Uterus (tissue), 4 donors: ENCODE measurements at regions of chr3 and their contacts with region 1.

Region 1: DNA sequence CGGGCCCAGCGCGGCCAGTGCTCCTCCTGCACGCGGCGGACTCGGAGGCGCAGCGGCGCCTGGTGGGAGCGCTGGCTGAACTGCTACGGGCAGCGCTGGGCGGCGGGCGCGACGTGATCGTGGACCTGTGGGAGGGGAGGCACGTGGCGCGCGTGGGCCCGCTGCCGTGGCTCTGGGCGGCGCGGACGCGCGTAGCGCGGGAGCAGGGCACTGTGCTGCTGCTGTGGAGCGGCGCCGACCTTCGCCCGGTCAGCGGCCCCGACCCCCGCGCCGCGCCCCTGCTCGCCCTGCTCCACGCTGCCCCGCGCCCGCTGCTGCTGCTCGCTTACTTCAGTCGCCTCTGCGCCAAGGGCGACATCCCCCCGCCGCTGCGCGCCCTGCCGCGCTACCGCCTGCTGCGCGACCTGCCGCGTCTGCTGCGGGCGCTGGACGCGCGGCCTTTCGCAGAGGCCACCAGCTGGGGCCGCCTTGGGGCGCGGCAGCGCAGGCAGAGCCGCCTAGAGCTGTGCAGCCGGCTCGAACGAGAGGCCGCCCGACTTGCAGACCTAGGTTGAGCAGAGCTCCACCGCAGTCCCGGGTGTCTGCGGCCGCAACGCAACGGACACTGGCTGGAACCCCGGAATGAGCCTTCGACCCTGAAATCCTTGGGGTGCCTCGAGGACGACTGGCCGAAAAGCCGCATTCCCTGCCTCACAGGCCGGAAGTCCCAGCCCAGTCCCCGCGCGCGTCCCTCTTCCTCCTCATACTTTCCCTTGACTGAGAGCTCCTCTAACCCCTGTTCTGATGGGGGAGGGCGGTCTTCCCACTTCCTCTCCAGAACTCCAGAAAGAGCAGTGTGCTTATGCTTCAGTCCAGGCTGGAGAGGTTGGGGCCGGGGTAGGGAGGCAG is 1.4 kb upstream of the IL17RC start:
- DNase-seq: peak; percentile 78 to 81
- H3K4me3 ChIP-seq: peak overlapping the region; percentile 58 to 85
- H3K27ac ChIP-seq: peak overlapping the region; percentile 90 to 93
- H3K4me1 ChIP-seq: peaks cover 4 to 14% of the 10 kb centered on the region in 2 donors
- H3K27me3 ChIP-seq: no peaks in the 10 kb centered on the region
- CTCF ChIP-seq: peak; percentile 38 to 85 (median 68)
- POLR2A ChIP-seq: peak; percentile 29 to 57

Region 2: DNA sequence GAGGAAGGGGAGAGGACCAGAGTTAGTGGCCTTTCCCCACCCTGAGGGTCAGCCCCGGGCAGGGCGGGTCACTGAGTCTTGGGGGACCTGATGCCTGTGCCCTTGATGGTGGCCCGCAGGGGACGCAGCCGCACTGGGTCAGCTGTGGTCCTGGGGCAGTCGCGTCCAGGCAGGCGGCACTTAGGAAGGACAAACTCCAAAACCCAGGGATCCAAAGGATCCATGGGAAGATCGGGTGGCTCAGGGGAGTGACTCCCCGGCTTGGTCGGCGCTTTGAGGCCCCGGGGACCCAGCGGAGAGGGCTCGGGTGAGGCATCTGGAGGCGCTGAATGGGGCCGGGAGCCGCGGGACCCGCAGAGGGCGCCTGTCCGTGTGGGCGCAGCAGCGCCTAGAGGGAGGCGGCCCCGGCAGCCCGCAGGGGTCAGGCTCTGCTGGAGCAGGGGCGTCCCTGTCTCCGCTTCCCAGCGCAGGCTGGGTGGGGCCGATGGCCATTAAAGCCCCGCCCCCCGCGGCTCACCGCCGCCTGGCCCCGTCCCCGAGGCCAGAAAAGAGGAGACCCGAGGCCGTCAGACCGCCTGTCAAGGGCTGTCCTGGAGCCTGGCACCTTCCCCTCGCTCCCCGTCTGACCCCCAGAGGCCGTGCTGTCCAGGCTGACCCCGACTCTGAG is 53.0 kb before region 1 on chr3:
- intact Hi-C with region 1: loop called (anchors 10 kb)
- DNase-seq: peak; percentile 75 to 85
- H3K4me3 ChIP-seq: peak overlapping the region; percentile 16 to 30
- H3K27ac ChIP-seq: peak overlapping the region; percentile 88 to 94
- H3K4me1 ChIP-seq: peaks cover 7 to 23% of the 10 kb centered on the region in 2 donors
- H3K27me3 ChIP-seq: no peaks in the 10 kb centered on the region
- CTCF ChIP-seq: peak; percentile 60 to 74 (median 62)
- POLR2A ChIP-seq: no peak